IMR-90 (cell line): ENCODE measurements at regions of chr15 and their contacts with region 1.

Region 1: DNA sequence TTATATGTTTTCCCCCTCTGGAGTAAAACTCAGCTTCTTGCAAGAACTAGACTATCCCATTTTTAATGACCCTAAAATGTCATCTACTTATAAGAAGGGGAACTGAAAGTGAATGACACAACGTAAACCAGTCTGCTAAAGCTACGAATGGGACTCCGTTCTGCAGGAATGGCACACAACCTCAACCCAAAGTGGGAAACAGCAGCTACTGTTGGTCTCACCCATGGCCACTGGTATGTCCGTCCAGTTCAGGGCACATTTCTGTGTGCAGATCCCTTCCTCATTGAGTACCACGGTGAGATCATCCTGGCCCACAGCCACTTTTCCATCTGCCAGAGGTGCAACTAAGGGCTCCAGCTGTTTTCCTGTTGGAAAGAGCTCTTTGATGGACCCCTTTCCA is 23.8 kb downstream of the VPS39 start:
- DNase-seq: peak; percentile 17
- ATAC-seq: peak; percentile 17; the same call in 1 of the 2 replicates
- H3K4me3 ChIP-seq: no peak overlapping the region
- H3K27ac ChIP-seq: no peak overlapping the region
- H3K4me1 ChIP-seq: peaks cover 2% of the 10 kb centered on the region; the same call in 1 of the 2 replicates
- H3K27me3 ChIP-seq: no peaks in the 10 kb centered on the region
- CTCF ChIP-seq: no peak
- POLR2A ChIP-seq: no peak
- RAD21 ChIP-seq: no peak

Region 2: DNA sequence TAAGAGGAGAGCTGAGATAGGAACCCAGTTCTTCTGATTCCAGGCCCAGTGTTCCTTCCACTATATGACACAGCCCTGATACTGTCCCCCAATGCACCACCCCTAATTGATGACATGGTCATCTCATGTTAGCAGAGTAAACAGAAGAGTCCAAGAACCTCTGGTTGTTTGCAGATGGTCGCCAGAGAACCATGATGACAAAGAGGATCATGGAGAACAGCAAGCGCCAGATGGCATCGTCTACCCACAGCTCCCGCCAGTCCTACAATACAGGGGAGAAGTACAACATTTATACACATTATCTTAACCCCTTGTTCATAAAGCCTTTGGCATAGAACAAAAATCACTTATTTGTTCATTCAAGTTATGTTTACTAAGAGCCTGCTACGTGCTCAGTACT is 42.4 kb after region 1 on chr15:
- CTCF ChIA-PET with region 1: interaction called, 7 read pairs
- POLR2A ChIA-PET with region 1: no interaction called
- dilution Hi-C with region 1: no loop called
- in situ Hi-C with region 1: no loop called
- intact Hi-C with region 1: loop called (anchors 5 kb)
- DNase-seq: no peak
- ATAC-seq: no peak
- H3K4me3 ChIP-seq: no peak overlapping the region
- H3K27ac ChIP-seq: no peak overlapping the region
- H3K4me1 ChIP-seq: no peaks in the 10 kb centered on the region
- H3K27me3 ChIP-seq: no peaks in the 10 kb centered on the region
- CTCF ChIP-seq: no peak
- POLR2A ChIP-seq: no peak
- RAD21 ChIP-seq: no peak